ENCODE measurements at regions of chr13 and their contacts with region 1.

Region 1: DNA sequence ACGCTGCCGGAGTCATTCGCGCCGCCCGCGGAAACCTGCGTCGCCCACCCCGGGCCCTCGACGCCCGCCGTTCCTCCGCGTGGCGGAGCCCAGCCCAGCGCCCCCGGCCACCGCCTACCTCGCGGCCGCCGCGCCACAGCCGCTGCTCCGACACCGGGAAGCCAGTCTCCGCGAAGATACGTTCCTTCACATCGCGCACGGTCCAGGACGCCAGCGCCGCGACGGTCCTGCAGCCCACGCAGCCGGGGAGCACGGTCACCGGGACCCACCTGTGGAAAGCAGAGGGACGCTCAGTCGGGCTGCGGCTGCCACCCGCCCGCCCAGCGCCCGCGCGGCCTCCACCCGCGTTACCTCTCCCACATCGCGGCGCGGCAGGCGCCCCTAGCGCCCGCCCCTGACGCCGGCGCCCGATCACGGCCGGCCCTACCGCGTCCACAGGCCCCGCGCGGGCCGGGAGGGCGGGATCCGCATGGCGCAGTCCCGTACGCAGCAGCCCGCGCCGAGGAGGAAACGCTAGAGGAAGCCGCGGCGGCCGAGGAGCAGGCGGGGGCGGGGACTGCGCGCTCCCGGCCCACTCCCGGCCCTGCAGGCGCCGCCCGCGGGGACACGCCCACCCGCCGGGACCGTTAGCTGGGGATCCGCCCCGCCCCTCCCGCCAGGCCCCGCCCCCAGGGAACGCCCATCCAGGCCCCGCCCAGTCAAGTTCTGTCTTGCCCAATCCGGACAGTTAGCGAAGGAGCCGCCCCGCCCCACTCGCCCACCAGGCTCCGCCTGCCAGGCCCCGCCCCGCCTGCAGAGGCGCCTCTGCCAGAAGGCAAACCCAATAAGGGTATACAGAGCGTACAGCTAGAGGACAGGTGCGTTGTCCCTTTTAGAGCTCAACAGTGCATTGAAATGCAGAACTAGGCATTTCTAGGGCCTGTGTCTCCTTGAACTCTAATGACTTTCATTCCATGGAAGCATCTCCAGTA is 58.2 kb downstream of the SACS start:
- DNase-seq: peak; percentile 97
- H3K4me3 Mint-ChIP-seq: peak overlapping the region; percentile 73
- H3K27ac Mint-ChIP-seq: peak overlapping the region; percentile 59
- H3K4me1 Mint-ChIP-seq: peaks cover 71% of the 10 kb centered on the region
- H3K27me3 Mint-ChIP-seq: no peaks in the 10 kb centered on the region

Region 2: GRCh38 chr13:21458813-21459701 is 1916.2 kb before region 1 on chr13 and contains the start of gene ZDHHC20:
- CTCF ChIA-PET with region 1: no interaction called
- intact Hi-C with region 1: loop called (anchors 10 kb)
- DNase-seq: peak; percentile 89
- H3K4me3 Mint-ChIP-seq: peak within 1 kb of the TSS; percentile 92
- H3K27ac Mint-ChIP-seq: peak within 1 kb of the TSS; percentile 88
- H3K4me1 Mint-ChIP-seq: peaks cover 29% of the 10 kb centered on the region
- H3K27me3 Mint-ChIP-seq: no peaks in the 10 kb centered on the region
- total RNA-seq, gene ZDHHC20: 48.0 to 50.7 TPM

Region 3: GRCh38 chr13:21686751-21687391 is 1688.4 kb before region 1 on chr13:
- CTCF ChIA-PET with region 1: no interaction called
- intact Hi-C with region 1: loop called (anchors 5 kb)
- DNase-seq: peak; percentile 60
- H3K4me3 Mint-ChIP-seq: no peak overlapping the region
- H3K27ac Mint-ChIP-seq: no peak overlapping the region
- H3K4me1 Mint-ChIP-seq: peaks cover 6% of the 10 kb centered on the region
- H3K27me3 Mint-ChIP-seq: no peaks in the 10 kb centered on the region

Region 4: GRCh38 chr13:23427342-23427843 is 52.1 kb after region 1 on chr13:
- CTCF ChIA-PET with region 1: no interaction called
- intact Hi-C with region 1: loop called (anchors 2 kb)
- DNase-seq: no peak
- H3K4me3 Mint-ChIP-seq: no peak overlapping the region
- H3K27ac Mint-ChIP-seq: no peak overlapping the region
- H3K4me1 Mint-ChIP-seq: peaks cover 2% of the 10 kb centered on the region
- H3K27me3 Mint-ChIP-seq: peaks cover 13% of the 10 kb centered on the region

Region 5: DNA sequence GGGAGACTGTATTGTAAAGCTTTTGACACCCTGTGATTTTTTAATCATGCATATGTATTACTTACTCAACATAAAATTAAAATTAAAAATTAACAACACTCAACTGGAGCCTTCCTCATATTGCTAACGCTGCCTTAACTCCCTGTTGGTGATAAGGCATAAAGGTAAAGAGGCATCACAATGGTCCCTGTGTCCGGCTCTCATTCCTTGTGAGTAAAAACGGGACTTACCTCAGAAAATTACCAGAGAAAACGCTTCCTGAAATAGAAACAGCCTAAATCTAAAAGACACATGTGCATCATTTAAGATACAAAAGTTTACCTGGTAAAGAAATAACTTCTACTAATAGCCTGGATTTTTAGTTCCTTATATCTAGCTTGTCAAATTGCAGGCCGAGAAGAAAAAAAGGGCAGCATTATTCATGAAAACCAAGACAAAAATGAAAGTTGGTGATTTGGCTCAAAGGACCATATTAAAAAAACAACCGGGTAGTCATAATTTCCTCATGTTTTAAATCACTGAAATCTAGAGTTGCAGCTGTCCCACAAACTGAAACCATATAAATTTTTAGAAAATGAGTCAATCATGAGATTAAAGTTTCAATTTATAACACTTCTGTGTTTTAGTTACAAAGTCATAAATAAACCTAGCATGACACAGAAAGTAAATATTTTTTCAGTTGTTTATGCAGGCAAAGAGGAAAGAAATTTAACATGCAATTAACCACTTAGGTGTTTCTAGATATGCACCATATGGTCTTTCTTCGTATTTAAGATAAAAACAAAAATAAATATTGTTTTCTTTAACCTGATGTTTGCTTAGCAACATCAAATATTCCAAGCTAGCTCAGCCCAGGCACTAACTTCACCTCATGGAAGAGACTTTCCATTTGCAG is 419.2 kb after region 1 on chr13:
- CTCF ChIA-PET with region 1: no interaction called
- intact Hi-C with region 1: loop called (anchors 5 kb)
- DNase-seq: no peak
- H3K4me3 Mint-ChIP-seq: no peak overlapping the region
- H3K27ac Mint-ChIP-seq: no peak overlapping the region
- H3K4me1 Mint-ChIP-seq: peaks cover 10% of the 10 kb centered on the region
- H3K27me3 Mint-ChIP-seq: no peaks in the 10 kb centered on the region

Region 6: GRCh38 chr13:24254146-24254841 is 879.0 kb after region 1 on chr13:
- CTCF ChIA-PET with region 1: no interaction called
- intact Hi-C with region 1: loop called (anchors 5 kb)
- DNase-seq: peak; percentile 79
- H3K4me3 Mint-ChIP-seq: peak overlapping the region; percentile 87
- H3K27ac Mint-ChIP-seq: peak overlapping the region; percentile 96
- H3K4me1 Mint-ChIP-seq: peaks cover 77% of the 10 kb centered on the region
- H3K27me3 Mint-ChIP-seq: no peaks in the 10 kb centered on the region

Region 7: DNA sequence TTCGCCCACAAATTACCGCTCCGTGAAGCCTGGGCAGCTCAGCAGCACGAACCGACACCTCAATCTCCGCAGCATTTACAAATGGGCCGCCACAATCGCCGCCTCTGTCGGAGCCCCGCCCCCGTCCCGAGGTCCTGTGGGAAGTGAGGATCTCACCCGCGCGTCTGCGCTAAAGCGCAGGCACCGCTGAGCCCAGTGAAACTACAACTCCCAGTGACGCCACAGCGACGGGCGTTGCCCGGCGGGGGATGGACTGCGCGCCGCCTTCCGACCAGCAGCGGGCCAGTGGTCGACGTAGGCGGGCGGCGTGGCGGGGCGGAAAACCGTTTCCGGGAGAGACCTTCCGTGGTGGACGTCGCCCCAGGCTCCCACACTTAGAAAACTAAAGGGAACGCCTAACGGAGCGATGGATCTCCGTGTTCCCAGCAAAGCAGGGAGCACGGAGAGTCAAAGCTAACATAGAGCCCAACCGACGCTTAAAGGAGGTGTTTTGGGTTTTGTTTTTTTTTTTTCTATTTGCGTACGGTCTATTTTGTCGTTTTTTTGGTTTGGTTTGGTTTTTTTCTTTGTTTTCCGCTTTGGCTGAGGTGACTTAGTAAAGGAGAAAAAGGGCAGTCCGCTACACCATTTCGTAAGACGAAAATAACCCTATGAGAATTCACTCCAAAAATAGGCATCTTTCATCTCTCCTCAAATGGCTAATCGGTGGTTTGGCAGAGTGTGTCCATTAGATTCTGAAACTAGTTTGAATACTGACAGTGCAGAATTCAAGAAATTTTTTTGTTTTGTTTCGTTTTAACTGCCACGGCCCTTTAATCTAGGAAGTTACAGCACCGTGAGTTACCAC is 1547.7 kb after region 1 on chr13:
- CTCF ChIA-PET with region 1: no interaction called
- intact Hi-C with region 1: loop called (anchors 5 kb)
- DNase-seq: peak; percentile 96
- H3K4me3 Mint-ChIP-seq: peak overlapping the region; percentile 94
- H3K27ac Mint-ChIP-seq: peak overlapping the region; percentile 85
- H3K4me1 Mint-ChIP-seq: peaks cover 8% of the 10 kb centered on the region
- H3K27me3 Mint-ChIP-seq: no peaks in the 10 kb centered on the region

Measured in activated naive CD4-positive, alpha-beta T cell treated with anti-CD3 and anti-CD28 coated beads for 36 hours (primary cell).